ENCODE measurements at regions of chr15 and their contacts with region 1.

Region 1: GRCh38 chr15:77496710-77497103 is 76.0 kb downstream of the HMG20A start:
- DNase-seq: peak; percentile 97
- H3K4me3 ChIP-seq: peak overlapping the region; percentile 28 to 33 (median 31)
- H3K27ac ChIP-seq: peak overlapping the region; percentile 76 to 85 (median 81)
- H3K4me1 ChIP-seq: peaks cover 52 to 79% (median 74%) of the 10 kb centered on the region in 4 donors
- H3K27me3 ChIP-seq: no peaks in the 10 kb centered on the region
- CTCF ChIP-seq: peak in 2 of 3 experiments; percentile 88 to 94
- EP300 ChIP-seq: no peak
- POLR2A ChIP-seq: no peak

Region 2: DNA sequence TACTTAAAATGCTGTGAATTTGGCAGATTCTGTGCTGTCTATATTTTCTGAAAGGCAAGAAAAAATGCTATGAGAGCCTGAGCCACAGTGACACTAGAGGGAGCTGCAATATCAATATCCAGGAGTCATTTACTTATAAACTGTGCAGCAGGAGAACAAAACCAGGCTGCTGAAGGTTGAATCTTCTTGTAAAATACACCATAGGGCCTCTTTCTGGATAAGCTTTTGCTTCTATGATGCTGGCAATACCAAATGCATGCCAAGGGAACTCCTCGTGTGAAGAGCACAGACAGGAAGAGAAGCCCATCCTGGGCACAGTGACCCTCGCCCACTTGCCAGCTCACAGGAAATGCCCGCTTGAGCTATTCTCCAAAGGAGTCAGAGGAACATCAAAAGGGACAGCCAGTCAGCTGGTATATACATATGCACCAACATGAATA is 377.8 kb before region 1 on chr15:
- intact Hi-C with region 1: loop called (anchors 5 kb)
- DNase-seq: peak; percentile 47
- H3K4me3 ChIP-seq: no peak overlapping the region
- H3K27ac ChIP-seq: no peak overlapping the region
- H3K4me1 ChIP-seq: peaks cover 0 to 8% (median 7%) of the 10 kb centered on the region in 4 donors
- H3K27me3 ChIP-seq: no peaks in the 10 kb centered on the region
- CTCF ChIP-seq: peak; percentile 59 to 72 (median 63)
- EP300 ChIP-seq: no peak
- POLR2A ChIP-seq: no peak

Region 3: DNA sequence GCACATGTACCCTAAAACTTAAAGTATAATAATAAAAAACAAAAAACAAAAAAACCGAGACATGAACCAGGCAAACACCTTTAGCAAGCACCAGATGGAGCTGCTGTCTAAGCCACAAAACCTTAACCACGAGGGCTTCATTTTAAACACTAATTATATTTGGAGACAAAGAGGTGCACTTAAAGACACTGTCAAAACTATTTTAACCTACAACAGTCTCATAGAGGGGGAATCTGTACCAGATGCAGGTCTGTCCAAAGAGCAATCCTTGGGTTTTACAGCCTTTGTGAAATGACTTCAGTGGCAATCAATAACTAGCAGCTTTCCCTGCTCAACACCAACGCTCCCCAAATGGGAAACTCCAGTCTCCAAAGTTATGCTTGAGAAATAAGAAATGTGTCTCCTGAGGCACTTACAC is 310.1 kb before region 1 on chr15:
- intact Hi-C with region 1: loop called (anchors 2 kb)
- DNase-seq: no peak
- H3K4me3 ChIP-seq: no peak overlapping the region
- H3K27ac ChIP-seq: peak overlapping the region; percentile 50 to 70 (median 64)
- H3K4me1 ChIP-seq: peaks cover 14 to 26% (median 23%) of the 10 kb centered on the region in 4 donors
- H3K27me3 ChIP-seq: no peaks in the 10 kb centered on the region
- CTCF ChIP-seq: peak; percentile 38 to 43 (median 40)
- EP300 ChIP-seq: no peak
- POLR2A ChIP-seq: no peak

Region 4: GRCh38 chr15:77419836-77420609 is 76.7 kb before region 1 on chr15 and contains the start of gene PEAK1:
- intact Hi-C with region 1: loop called (anchors 2 kb)
- DNase-seq: peak; percentile 99
- H3K4me3 ChIP-seq: peak within 1 kb of the TSS; percentile 85 to 94 (median 92)
- H3K27ac ChIP-seq: peak within 1 kb of the TSS; percentile 87 to 90 (median 90)
- H3K4me1 ChIP-seq: peaks cover 40 to 79% (median 73%) of the 10 kb centered on the region in 4 donors
- H3K27me3 ChIP-seq: no peaks in the 10 kb centered on the region
- CTCF ChIP-seq: no peak
- EP300 ChIP-seq: no peak
- POLR2A ChIP-seq: peak; percentile 80
- total RNA-seq, gene PEAK1: 91.8 to 170 (median 123) TPM

Region 5: DNA sequence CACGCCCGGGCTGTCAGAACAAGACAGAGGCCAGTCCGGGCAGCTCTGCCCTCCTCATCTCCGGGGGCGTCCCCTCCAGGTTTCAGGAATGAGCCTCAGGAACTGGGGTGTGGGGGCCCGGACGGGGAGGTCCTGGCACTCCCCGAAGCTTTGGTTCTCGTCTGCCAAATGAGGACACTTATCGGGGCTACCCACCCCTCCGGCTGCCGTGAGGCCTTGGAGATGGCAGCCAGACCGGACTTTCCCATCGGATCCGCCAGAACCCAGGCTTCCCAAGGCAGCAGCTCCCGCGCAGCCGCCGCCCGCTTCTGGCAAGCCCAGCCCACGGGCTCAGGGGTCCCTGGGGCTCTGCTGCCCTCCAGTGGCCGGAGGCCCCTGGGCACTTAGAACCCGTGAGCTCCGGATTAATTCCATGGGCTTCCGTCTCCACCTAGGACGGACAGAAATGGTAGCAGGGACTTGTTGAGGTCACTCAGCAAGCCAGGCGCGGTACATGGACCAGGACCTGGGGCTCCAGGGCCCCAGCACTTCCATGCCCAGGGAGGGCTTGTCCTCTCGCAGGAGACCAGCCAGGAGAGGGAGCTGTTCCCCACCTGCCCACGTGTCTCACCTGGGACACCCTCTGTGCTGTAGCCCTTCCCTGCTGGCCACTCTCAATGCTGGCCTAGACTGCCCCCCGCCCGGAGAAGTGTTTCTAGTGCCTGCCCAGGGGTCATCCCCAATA is 46.6 kb after region 1 on chr15:
- intact Hi-C with region 1: loop called (anchors 5 kb)
- DNase-seq: peak; percentile 94
- H3K4me3 ChIP-seq: peak overlapping the region; percentile 38 to 53 (median 41)
- H3K27ac ChIP-seq: peak overlapping the region; percentile 11 to 51 (median 22)
- H3K4me1 ChIP-seq: peaks cover 18 to 36% (median 28%) of the 10 kb centered on the region in 4 donors
- H3K27me3 ChIP-seq: no peaks in the 10 kb centered on the region
- CTCF ChIP-seq: peak; percentile 95 to 99 (median 97)
- EP300 ChIP-seq: no peak
- POLR2A ChIP-seq: no peak